Motor neuron (in vitro differentiated cells): ENCODE measurements at regions of chr3 and their contacts with region 1.

Region 1: GRCh38 chr3:193452338-193452737 is 73.8 kb upstream of the ATP13A5 start:
- ATAC-seq: peak in 3 of 8 experiments; percentile 78 to 85 (median 83)
- H3K4me3 ChIP-seq: no peak overlapping the region
- H3K27ac ChIP-seq: no peak overlapping the region
- H3K4me1 ChIP-seq: peaks cover 3 to 4% of the 10 kb centered on the region in 2 donors

Region 2: DNA sequence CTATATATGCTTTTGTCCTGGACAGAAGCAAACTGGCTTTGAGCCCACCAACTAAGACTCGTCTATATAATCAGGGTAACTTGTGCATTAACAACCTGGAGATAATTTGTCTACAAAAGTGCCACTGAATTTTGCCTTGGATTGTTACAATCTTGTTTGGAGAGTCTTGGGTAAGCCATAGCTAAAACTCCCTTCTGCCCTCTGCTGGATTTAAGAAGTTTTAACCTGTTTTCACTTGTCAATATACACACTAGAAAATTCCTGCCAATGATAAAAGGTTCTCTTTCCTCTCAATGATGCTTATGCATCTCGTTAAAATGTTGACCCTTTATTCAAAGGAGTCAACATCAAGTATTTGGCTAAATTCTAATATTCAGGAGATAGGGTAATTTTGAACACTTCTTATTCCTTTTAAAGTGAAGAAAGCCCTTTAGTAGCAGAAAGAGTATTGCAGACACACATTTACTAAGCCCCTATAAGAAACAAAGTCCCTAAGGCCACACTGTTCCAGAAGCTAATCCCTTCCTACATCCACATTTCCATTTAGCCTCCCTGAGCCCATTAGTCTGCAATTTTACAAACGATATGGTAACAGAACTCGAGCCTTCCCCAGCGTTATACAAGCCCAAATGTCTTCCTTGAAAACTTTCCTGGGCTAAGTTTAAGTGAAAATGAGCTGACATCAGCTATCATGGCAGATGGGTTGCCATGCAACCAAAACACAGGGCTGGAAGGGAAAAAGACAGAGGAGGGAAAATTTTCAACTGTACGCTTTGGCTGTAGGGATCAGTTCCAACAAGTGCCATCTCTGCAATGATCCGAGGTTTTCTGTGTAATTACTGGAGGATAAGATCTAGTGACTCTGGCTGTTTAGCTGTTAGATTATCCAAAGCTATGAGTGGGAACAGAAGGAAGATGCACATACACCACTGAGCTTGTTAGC is 649.1 kb before region 1 on chr3:
- in situ Hi-C with region 1: loop called in 2 of 9 experiments (anchors 25 kb)
- ATAC-seq: peak in 5 of 8 experiments; percentile 47 to 86 (median 79)
- H3K4me3 ChIP-seq: no peak overlapping the region
- H3K27ac ChIP-seq: no peak overlapping the region
- H3K4me1 ChIP-seq: peaks cover 0 to 4% of the 10 kb centered on the region in 2 donors

Region 3: DNA sequence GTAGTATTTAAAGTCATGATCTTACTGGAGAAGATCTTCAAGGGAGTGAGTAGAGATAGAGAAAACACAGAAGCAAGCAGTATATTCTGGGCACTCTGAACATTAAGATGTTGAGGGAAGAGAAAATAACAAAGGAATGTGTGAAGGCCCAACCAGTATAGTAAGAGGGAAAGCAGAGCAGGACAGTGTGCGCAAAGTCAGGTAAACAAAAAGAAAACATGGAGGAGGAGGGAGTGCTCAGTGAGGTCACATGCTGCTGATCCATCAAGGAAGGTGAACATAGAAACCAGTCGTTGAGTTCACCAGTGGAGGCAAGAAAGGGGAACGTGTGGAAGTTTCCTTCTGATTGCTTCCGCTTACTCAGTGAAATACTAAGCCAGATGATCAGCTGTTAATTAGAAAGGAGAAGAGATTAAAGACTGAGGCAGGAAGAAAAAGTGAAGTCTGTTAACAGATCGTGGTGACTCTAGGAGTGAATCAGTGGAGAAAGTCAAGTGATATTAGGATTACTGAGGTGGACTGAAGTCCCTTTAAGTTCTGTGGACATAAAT is 187.9 kb after region 1 on chr3:
- in situ Hi-C with region 1: no loop called
- ATAC-seq: no peak
- H3K4me3 ChIP-seq: no peak overlapping the region
- H3K27ac ChIP-seq: no peak overlapping the region
- H3K4me1 ChIP-seq: no peaks in the 10 kb centered on the region